ENCODE measurements at regions of chr2 and their contacts with region 1.

Region 1: DNA sequence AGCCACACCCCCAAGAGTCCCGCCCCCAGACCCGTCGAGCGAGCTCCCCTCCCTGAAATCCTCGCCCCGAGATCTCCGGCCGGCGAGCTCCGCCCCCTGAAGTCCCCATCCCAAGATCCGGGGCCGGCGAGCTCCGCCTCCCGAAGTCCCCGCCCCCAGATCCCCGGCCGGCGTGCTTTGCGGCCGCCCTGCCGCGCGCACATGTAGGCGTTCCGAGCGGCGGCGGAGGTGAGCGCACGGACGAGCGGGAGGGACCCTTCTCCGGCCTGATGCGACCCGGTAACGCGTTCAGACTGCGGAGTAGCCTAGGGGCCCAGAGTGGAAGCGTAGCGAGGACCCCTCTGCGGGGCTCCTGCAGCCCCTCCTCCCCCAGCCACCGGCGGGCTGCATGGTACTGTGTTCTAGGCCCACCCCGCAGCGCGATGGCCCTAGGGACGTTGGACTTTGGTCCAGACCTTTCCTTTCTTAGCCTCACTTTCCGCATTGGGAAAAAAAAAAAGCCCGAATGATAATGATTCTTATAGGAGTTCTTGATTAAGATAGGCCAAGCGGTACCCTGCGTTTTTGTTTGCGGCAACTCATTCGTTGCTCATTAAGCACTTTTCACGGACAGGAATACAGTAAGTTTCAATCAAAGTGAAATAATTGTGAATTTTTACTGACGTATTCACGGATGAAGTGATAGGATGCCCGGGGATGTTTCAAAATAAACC is at the start of gene TMEM177:
- DNase-seq: peak; percentile 94
- ATAC-seq: peak; percentile 93
- H3K4me3 Mint-ChIP-seq: peak within 1 kb of the TSS; percentile 87
- H3K27ac Mint-ChIP-seq: peak within 1 kb of the TSS; percentile 88
- H3K4me1 Mint-ChIP-seq: peaks cover 33% of the 10 kb centered on the region
- H3K27me3 Mint-ChIP-seq: no peaks in the 10 kb centered on the region
- total RNA-seq, gene TMEM177: 13.6 to 15.8 TPM

Region 2: GRCh38 chr2:119544075-119544938 is 134.8 kb before region 1 on chr2 and contains the start of gene CFAP221:
- CTCF ChIA-PET with region 1: no interaction called
- POLR2A ChIA-PET with region 1: no interaction called
- intact Hi-C with region 1: loop called in 1 of 2 experiments (anchors 1 kb)
- DNase-seq: peak; percentile 83
- ATAC-seq: peak; percentile 95
- H3K4me3 Mint-ChIP-seq: peak within 1 kb of the TSS; percentile 65
- H3K27ac Mint-ChIP-seq: no peak within 1 kb of the TSS
- H3K4me1 Mint-ChIP-seq: peaks cover 4% of the 10 kb centered on the region
- H3K27me3 Mint-ChIP-seq: peaks cover 43% of the 10 kb centered on the region
- total RNA-seq, gene CFAP221: not detected

Region 3: DNA sequence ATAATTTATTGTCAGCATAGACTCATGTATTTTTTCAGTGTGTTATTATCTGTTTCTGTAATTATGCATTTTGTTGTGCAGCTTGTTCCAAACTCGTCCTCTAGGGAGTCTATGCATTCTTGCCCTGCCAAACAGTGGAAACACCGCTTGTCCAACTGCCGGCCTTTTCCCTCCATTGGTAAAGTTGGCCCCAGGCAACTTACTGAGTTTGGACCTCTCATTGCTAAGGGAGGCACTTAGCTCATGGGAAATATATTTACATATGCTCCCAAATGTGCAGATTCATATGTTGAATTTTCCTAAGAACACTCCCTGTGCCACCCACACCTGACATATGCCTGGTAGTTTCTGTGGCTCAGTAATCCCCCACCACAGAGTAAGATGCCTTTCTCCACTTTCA is 446.0 kb after region 1 on chr2:
- CTCF ChIA-PET with region 1: no interaction called
- POLR2A ChIA-PET with region 1: no interaction called
- intact Hi-C with region 1: no loop called
- DNase-seq: no peak
- ATAC-seq: no peak
- H3K4me3 Mint-ChIP-seq: no peak overlapping the region
- H3K27ac Mint-ChIP-seq: no peak overlapping the region
- H3K4me1 Mint-ChIP-seq: no peaks in the 10 kb centered on the region
- H3K27me3 Mint-ChIP-seq: peaks cover 2% of the 10 kb centered on the region

Region 4: DNA sequence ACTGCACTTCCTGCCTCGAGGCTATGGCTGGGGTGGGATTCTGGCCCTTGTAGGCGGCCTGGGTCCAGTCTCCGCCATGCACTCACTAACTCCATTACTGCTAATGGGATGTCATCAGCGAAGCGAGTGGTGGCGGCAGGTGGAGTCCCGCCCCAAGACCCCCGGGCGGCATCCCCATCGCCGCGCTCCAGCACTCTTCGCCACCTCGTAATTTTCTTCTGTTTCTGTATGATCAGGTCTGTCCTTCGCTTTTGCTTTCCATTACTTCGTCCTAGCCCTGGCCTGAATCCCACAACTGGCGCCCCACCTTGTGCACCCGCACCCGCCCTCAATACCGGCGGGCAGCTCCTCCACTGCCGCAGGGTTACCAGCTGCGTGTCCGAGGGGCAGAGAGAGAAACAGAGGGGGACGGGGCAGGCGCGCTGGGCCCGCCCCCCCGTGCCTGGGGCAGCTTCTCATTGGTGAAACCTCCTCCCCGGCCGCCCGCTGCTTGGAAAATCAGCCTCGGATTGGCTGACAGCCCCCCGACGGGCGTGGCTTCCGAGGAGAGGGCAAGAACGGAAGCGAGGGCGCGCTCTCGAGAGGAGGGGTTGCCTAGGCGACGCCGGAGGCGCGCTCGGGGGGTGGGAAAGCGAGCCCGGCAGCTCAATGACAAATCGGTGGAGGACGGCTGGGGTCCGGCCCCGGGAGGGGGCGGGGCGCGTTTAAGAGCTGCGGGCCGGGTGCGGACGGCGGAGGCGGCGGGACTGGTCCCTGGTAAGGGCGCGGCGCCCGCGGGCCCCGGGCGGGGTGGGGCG is 573.3 kb after region 1 on chr2 and contains the start of gene RALB:
- CTCF ChIA-PET with region 1: no interaction called
- POLR2A ChIA-PET with region 1: no interaction called
- intact Hi-C with region 1: loop called in 1 of 2 experiments (anchors 1 kb)
- DNase-seq: peak; percentile 100
- ATAC-seq: peak; percentile 95
- H3K4me3 Mint-ChIP-seq: peak within 1 kb of the TSS; percentile 92
- H3K27ac Mint-ChIP-seq: peak within 1 kb of the TSS; percentile 86
- H3K4me1 Mint-ChIP-seq: peaks cover 41% of the 10 kb centered on the region
- H3K27me3 Mint-ChIP-seq: peaks cover 6% of the 10 kb centered on the region
- total RNA-seq, gene RALB: 34.0 to 34.3 TPM

Measured in activated CD4-positive, alpha-beta T cell treated with anti-CD3 and anti-CD28 coated beads for 36 hours (primary cell).